HepG2 (cell line): ENCODE measurements at regions of chr3 and their contacts with region 1.

Region 1: DNA sequence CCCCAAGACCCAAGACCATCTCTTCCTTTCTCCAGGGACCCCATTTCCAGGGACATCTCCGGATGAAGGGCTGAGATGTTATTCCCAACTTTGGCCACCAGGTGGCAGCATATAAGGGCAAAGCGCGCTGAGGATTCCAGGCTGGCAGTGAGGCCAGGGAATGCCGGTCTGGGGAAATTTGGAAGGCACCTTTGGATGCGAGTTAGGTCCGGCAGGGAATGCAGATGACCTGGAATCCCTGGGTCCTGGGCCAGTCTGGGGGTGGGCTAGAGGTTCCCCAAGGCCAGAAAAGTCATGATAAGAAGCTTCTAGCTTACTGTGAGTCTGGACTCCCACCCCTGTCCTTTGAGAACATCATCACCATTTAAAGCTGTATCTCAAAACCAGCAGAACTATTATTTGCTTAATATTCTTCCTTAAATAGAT is 1.6 kb upstream of the CHST13 start:
- DNase-seq: peak; percentile 60
- ATAC-seq: no peak
- H3K4me3 ChIP-seq: peak overlapping the region; percentile 35 to 70 (median 65); a peak in 4 of 6 replicates
- H3K27ac ChIP-seq: peak overlapping the region; percentile 98
- H3K4me1 ChIP-seq: peaks cover 91% of the 10 kb centered on the region
- H3K27me3 ChIP-seq: no peaks in the 10 kb centered on the region; a peak in 1 of 5 replicates
- CTCF ChIP-seq: peak; percentile 93
- EP300 ChIP-seq: no peak
- POLR2A ChIP-seq: no peak
- RAD21 ChIP-seq: peak; percentile 80

Region 2: GRCh38 chr3:126284258-126284904 is 238.0 kb before region 1 on chr3:
- CTCF ChIA-PET with region 1: no interaction called
- POLR2A ChIA-PET with region 1: no interaction called
- in situ Hi-C with region 1: no loop called
- intact Hi-C with region 1: no loop called
- DNase-seq: no peak
- ATAC-seq: no peak
- H3K4me3 ChIP-seq: no peak overlapping the region
- H3K27ac ChIP-seq: no peak overlapping the region
- H3K4me1 ChIP-seq: peaks cover 11% of the 10 kb centered on the region; the same call in 1 of the 2 replicates
- H3K27me3 ChIP-seq: peaks cover 0 to 6% of the 10 kb centered on the region in 2 experiments; a peak in 2 of 5 replicates
- CTCF ChIP-seq: no peak
- EP300 ChIP-seq: no peak
- POLR2A ChIP-seq: no peak
- RAD21 ChIP-seq: no peak

Region 3: DNA sequence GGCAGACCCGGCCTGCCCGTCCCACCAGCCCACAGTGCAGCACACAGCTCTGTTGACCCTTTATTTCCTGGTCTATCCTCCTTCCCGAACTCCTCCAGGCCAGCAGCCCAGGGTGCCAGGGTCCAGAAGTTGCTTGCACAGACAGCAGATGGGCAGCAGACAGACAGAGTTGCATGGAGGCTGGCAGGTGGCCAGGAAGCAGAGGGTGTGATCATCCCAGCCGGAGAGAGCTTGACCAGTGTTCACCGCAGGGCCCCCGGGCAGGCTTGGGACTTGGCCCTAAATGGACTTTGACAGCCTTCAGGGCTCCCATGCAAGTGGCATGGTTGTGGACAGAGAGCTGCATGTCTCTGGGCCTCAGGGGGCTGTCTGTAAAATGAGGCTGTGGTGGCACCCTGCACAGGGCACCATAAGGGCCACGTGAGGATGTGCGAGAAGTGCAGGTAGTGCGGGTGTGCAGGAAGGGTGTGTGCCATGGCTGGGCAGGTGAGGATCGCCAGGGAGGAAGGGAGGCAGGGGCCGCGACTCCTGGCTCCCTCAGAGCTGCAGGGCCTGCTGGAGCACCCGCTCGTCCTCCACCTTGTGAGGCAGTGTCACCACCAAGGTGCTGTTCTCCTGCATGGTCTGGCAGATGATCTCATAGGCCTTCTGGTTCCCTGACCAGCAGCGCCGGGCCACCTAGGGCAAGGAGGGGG is 40.4 kb before region 1 on chr3:
- CTCF ChIA-PET with region 1: no interaction called
- POLR2A ChIA-PET with region 1: interaction called, 26 read pairs
- in situ Hi-C with region 1: no loop called
- intact Hi-C with region 1: loop called (anchors 5 kb)
- DNase-seq: peak; percentile 71
- ATAC-seq: peak; percentile 76
- H3K4me3 ChIP-seq: peak overlapping the region in 1 of 3 experiments; percentile 49; a peak in 2 of 6 replicates
- H3K27ac ChIP-seq: peak overlapping the region; percentile 34
- H3K4me1 ChIP-seq: peaks cover 98% of the 10 kb centered on the region
- H3K27me3 ChIP-seq: no peaks in the 10 kb centered on the region
- CTCF ChIP-seq: no peak
- EP300 ChIP-seq: no peak
- POLR2A ChIP-seq: no peak
- RAD21 ChIP-seq: no peak

Region 4: GRCh38 chr3:126498929-126499328 is 23.4 kb before region 1 on chr3:
- CTCF ChIA-PET with region 1: no interaction called
- POLR2A ChIA-PET with region 1: interaction called, 10 read pairs
- in situ Hi-C with region 1: no loop called
- intact Hi-C with region 1: loop called (anchors 2 kb)
- DNase-seq: peak; percentile 53
- ATAC-seq: peak; percentile 87
- H3K4me3 ChIP-seq: no peak overlapping the region; a peak in 1 of 6 replicates
- H3K27ac ChIP-seq: no peak overlapping the region
- H3K4me1 ChIP-seq: peaks cover 36% of the 10 kb centered on the region
- H3K27me3 ChIP-seq: no peaks in the 10 kb centered on the region
- CTCF ChIP-seq: peak; percentile 87
- EP300 ChIP-seq: no peak
- POLR2A ChIP-seq: no peak
- RAD21 ChIP-seq: peak; percentile 80